Caco-2 (cell line): ENCODE measurements at regions of chr10 and their contacts with region 1.

Region 1: DNA sequence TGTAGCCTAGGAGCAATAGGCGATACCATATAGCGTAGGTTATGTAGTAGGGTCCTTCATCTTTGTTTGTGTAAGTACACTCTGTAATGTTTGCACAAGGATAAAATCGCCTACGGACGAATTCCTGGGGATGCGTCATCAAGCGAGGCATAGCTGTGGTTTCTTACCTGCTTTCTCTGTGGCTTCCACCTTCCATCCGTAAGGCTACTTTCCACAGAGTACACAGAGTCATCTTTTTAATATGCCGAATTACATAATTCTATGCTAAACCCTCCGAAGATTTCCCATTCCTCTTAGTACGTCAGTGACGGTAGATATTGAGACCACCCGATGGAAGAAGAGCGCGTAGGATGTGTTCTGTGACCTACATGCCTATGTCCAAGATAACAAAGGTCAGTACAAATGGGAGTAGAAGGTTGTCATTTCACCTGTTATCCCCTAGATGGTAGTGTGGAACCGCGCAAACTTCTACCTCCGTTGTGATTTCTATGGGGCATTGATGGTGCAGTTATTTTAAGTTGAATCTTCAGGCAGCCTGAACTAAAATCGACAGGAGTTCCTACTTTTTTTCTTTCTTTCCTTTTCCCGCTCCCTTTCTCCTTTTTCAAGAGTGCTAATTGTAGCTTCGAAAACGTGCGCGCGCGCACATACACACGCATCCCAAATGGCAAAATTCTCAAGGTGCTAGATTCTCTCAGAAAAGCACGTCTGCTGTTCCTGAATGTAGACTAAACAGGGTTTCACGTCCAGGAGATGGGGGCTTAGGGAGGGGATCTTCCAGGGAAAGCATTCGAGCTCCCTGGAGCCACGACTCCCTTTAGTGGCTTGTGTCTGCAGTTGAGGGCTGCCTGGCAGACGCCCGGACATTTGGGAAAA is 111.7 kb upstream of the MBL2 start:
- DNase-seq: peak; percentile 95 to 96
- H3K4me3 ChIP-seq: peak overlapping the region; percentile 37
- H3K4me3 Mint-ChIP-seq: peak overlapping the region; percentile 85
- H3K27ac Mint-ChIP-seq: peak overlapping the region; percentile 92
- H3K4me1 ChIP-seq: peaks cover 11% of the 10 kb centered on the region
- H3K4me1 Mint-ChIP-seq: peaks cover 35% of the 10 kb centered on the region
- H3K27me3 ChIP-seq: no peaks in the 10 kb centered on the region
- H3K27me3 Mint-ChIP-seq: no peaks in the 10 kb centered on the region
- CTCF ChIP-seq: peak; percentile 92 to 97

Region 2: DNA sequence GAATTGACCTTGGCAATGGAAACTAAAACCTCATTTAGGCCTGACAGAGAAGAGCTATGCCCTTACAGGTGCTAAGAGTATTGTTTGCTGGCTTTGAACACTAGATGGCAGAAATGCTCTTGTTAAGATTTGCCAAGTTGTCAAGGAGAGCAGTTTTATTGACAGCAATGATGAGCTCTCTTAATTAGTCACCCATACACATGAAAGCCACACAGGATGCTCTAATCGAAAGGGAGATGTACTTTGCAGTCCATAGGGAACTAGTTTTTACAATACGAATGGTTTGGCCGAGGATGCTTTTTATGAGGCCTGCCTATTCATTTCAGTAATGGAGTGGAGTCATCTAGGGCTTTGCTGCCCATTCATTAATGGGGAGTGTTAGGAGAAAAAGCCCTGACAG is 66.2 kb before region 1 on chr10:
- CTCF ChIA-PET with region 1: interaction called, 29 read pairs
- POLR2A ChIA-PET with region 1: no interaction called
- intact Hi-C with region 1: loop called (anchors 1 kb)
- DNase-seq: peak in 1 of 2 experiments; percentile 76
- H3K4me3 ChIP-seq: no peak overlapping the region
- H3K4me3 Mint-ChIP-seq: no peak overlapping the region
- H3K27ac Mint-ChIP-seq: no peak overlapping the region
- H3K4me1 ChIP-seq: no peaks in the 10 kb centered on the region; the same call in 1 of the 2 replicates
- H3K4me1 Mint-ChIP-seq: no peaks in the 10 kb centered on the region
- H3K27me3 ChIP-seq: no peaks in the 10 kb centered on the region; the same call in 1 of the 2 replicates
- H3K27me3 Mint-ChIP-seq: peaks cover 3% of the 10 kb centered on the region
- CTCF ChIP-seq: peak; percentile 89 to 90

Region 3: DNA sequence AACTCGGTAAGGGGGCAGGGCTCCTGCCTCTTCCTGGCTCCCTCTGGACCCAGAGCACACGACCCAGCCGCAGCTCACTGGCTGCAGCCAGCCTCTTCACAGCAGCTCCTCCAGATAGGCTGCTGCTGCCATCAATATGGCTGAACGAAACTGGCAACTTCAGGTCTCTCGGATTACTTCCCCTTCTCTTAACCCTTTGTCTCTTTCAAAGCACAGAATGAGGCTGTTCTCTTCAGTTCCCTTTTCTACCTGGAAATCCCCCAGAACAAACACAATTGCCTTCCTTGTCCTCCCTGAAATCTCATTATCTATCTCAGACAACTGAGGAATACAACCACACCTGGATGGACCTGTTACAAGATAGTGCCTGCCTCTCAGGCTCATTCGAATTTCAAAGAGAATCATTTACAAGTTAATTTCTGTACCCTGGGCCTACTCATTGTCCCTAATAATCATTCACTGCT is 81.7 kb after region 1 on chr10:
- CTCF ChIA-PET with region 1: interaction called, 3 read pairs
- POLR2A ChIA-PET with region 1: no interaction called
- intact Hi-C with region 1: loop called (anchors 1 kb)
- DNase-seq: peak; percentile 60 to 69
- H3K4me3 ChIP-seq: no peak overlapping the region
- H3K4me3 Mint-ChIP-seq: peak overlapping the region; percentile 44
- H3K27ac Mint-ChIP-seq: peak overlapping the region; percentile 88
- H3K4me1 ChIP-seq: peaks cover 70% of the 10 kb centered on the region
- H3K4me1 Mint-ChIP-seq: peaks cover 57% of the 10 kb centered on the region
- H3K27me3 ChIP-seq: no peaks in the 10 kb centered on the region
- H3K27me3 Mint-ChIP-seq: no peaks in the 10 kb centered on the region
- CTCF ChIP-seq: no peak

Region 4: GRCh38 chr10:53209944-53210611 is 325.8 kb after region 1 on chr10:
- CTCF ChIA-PET with region 1: interaction called, 3 read pairs
- POLR2A ChIA-PET with region 1: no interaction called
- intact Hi-C with region 1: loop called (anchors 1 kb)
- DNase-seq: peak in 1 of 2 experiments; percentile 45
- H3K4me3 ChIP-seq: no peak overlapping the region
- H3K4me3 Mint-ChIP-seq: no peak overlapping the region
- H3K27ac Mint-ChIP-seq: no peak overlapping the region
- H3K4me1 ChIP-seq: 0 out of 2 replicates have a peak, but pooled peaks cover 3% of the 10 kb centered on the region
- H3K4me1 Mint-ChIP-seq: no peaks in the 10 kb centered on the region
- H3K27me3 ChIP-seq: no peaks in the 10 kb centered on the region
- H3K27me3 Mint-ChIP-seq: peaks cover 2% of the 10 kb centered on the region
- CTCF ChIP-seq: peak; percentile 77

Region 5: GRCh38 chr10:53601260-53601875 is 717.1 kb after region 1 on chr10:
- CTCF ChIA-PET with region 1: interaction called, 5 read pairs
- POLR2A ChIA-PET with region 1: no interaction called
- intact Hi-C with region 1: loop called (anchors 1 kb)
- DNase-seq: peak in 1 of 2 experiments; percentile 43
- H3K4me3 ChIP-seq: no peak overlapping the region
- H3K4me3 Mint-ChIP-seq: no peak overlapping the region
- H3K27ac Mint-ChIP-seq: no peak overlapping the region
- H3K4me1 ChIP-seq: peaks cover 32% of the 10 kb centered on the region
- H3K4me1 Mint-ChIP-seq: peaks cover 29% of the 10 kb centered on the region
- H3K27me3 ChIP-seq: no peaks in the 10 kb centered on the region
- H3K27me3 Mint-ChIP-seq: no peaks in the 10 kb centered on the region
- CTCF ChIP-seq: peak; percentile 98 to 99

Region 6: GRCh38 chr10:53846809-53847208 is 962.6 kb after region 1 on chr10:
- CTCF ChIA-PET with region 1: interaction called, 3 read pairs
- POLR2A ChIA-PET with region 1: no interaction called
- intact Hi-C with region 1: loop called (anchors 1 kb)
- DNase-seq: no peak
- H3K4me3 ChIP-seq: no peak overlapping the region
- H3K4me3 Mint-ChIP-seq: no peak overlapping the region
- H3K27ac Mint-ChIP-seq: no peak overlapping the region
- H3K4me1 ChIP-seq: no peaks in the 10 kb centered on the region
- H3K4me1 Mint-ChIP-seq: no peaks in the 10 kb centered on the region
- H3K27me3 ChIP-seq: no peaks in the 10 kb centered on the region
- H3K27me3 Mint-ChIP-seq: no peaks in the 10 kb centered on the region
- CTCF ChIP-seq: peak; percentile 35 to 55

Region 7: DNA sequence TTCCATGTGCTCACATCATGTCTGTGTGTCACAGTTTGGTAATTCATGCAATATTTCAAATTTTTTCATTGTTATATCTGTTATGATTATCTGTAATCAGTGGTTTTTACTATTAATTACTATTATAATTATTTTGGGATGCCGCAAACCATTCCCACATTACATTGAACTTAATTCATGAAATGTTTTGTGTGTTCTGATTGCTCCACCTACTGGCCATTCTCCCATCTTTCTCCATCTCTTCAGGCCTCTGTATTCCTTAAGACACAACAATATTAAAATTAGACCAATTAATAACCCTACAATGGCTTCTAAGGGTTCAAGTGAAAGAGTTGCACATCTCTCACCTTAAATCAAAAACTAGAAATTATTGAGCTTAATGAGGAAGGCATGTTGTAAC is 1518.3 kb after region 1 on chr10:
- CTCF ChIA-PET with region 1: interaction called, 6 read pairs
- POLR2A ChIA-PET with region 1: no interaction called
- intact Hi-C with region 1: loop called (anchors 1 kb)
- DNase-seq: peak in 1 of 2 experiments; percentile 59
- H3K4me3 ChIP-seq: no peak overlapping the region
- H3K4me3 Mint-ChIP-seq: no peak overlapping the region
- H3K27ac Mint-ChIP-seq: no peak overlapping the region
- H3K4me1 ChIP-seq: no peaks in the 10 kb centered on the region
- H3K4me1 Mint-ChIP-seq: no peaks in the 10 kb centered on the region
- H3K27me3 ChIP-seq: no peaks in the 10 kb centered on the region
- H3K27me3 Mint-ChIP-seq: peaks cover 4% of the 10 kb centered on the region
- CTCF ChIP-seq: peak; percentile 80 to 89